H1 (cell line): ENCODE measurements at regions of chr2 and their contacts with region 1.

Region 1: DNA sequence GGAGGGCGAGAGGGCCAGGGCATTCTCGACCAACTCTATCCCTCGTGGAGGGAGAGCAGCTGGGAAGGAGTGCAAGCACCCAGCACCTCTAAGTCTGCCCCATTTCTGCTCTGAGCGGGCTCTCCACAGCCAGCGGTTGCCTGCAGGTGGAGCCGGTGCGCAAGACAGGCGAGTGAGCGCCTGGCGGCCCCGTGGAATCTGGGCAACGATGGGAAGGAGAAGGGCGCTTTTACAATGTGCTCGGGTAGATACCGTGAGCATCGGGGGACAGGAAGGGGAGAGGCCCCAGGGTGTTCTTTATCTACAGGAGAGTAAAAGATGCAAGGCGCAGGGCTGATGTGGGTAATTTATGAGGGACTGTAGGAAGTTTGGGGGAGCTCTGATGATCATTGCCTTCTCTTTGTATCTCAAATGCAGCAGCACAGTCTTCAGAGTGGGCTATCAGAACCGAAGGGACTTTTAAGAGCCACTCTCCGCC is 867 bp upstream of the TTL start:
- DNase-seq: peak in 1 of 2 experiments; percentile 84
- H3K4me3 ChIP-seq: peak overlapping the region; percentile 72 to 86 (median 74)
- H3K27ac ChIP-seq: no peak overlapping the region
- H3K4me1 ChIP-seq: peaks cover 0 to 7% (median 4%) of the 10 kb centered on the region in 4 experiments; a peak in 5 of 7 replicates
- H3K27me3 ChIP-seq: no peaks in the 10 kb centered on the region; a peak in 1 of 7 replicates
- CTCF ChIP-seq: peak; percentile 81 to 83 (median 82)
- EP300 ChIP-seq: no peak
- POLR2A ChIP-seq: 0 out of 3 replicates have a peak, but pooled peaks of 1 of the 2 experiments have one; percentile 18
- RAD21 ChIP-seq: peak; percentile 57 to 74

Region 2: DNA sequence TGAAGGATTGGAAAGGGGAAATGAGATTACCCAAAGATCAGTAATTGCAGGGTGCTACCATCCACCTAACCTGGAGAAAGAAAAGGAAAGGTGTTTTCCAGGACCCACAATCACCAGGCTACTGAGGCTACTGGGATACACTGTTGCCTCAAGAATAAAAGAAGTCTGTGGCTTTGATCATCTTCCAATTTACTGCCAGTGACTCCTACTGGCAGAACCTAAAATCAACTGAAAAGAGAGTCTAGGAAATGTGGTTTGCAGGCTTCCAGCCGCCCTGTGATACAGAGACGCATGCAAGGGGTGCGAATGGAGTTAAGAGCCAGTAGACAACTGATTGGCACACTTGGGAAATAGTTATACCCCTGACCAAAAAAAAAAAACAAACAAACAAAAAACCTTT is 15.7 kb before region 1 on chr2:
- CTCF ChIA-PET with region 1: interaction called, 17 read pairs
- POLR2A ChIA-PET with region 1: interaction called, 3 read pairs
- DNase-seq: no peak
- H3K4me3 ChIP-seq: no peak overlapping the region
- H3K27ac ChIP-seq: no peak overlapping the region
- H3K4me1 ChIP-seq: no peaks in the 10 kb centered on the region
- H3K27me3 ChIP-seq: no peaks in the 10 kb centered on the region
- CTCF ChIP-seq: peak in 2 of 3 experiments; percentile 25 to 63; a peak in 3 of 4 replicates
- EP300 ChIP-seq: no peak
- POLR2A ChIP-seq: no peak
- RAD21 ChIP-seq: peak in 1 of 2 experiments; percentile 32; a peak in 2 of 4 replicates

Region 3: GRCh38 chr2:112493858-112494648 is 13.0 kb after region 1 on chr2:
- CTCF ChIA-PET with region 1: interaction called, 11 read pairs
- POLR2A ChIA-PET with region 1: interaction called, 3 read pairs
- DNase-seq: no peak
- H3K4me3 ChIP-seq: no peak overlapping the region
- H3K27ac ChIP-seq: no peak overlapping the region
- H3K4me1 ChIP-seq: peaks cover 0 to 4% (median 0%) of the 10 kb centered on the region in 4 experiments; a peak in 1 of 7 replicates
- H3K27me3 ChIP-seq: no peaks in the 10 kb centered on the region
- CTCF ChIP-seq: no peak
- EP300 ChIP-seq: no peak
- POLR2A ChIP-seq: no peak
- RAD21 ChIP-seq: no peak